Ascending aorta (tissue), 2 donors: ENCODE measurements at regions of chr1 and their contacts with region 1.

Region 1: DNA sequence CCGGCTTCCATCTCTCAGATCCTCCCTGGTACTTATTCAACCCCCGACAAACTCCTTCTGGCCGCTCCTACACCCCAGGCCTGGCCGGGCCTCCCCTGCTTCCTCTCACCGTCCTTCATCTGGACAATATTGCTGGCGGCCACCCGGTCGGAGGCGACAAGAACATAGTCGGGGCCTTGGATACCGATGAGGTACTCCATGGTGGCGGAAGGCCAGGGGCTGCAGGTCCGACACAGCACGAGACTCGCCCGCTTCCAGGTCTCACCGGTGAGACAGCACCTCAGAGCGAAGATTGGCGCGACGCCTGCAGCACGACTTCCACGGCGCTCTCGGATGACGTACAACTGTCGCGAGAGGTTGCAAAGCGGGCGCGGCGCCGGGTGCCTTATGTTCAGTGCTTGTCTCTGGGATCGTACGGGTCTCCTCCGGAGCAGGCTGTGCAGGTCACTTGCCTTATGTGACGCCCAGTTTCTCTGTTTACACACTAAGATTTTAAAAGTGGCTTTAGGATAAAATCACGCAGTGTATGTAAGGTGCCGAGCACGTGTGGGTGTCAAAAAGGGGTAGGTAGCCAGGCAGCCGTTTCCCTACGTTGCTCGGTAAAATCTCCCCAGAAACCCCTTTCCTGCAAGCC is at the start of gene PSMB2:
- DNase-seq: peak; percentile 85 to 97
- H3K4me3 ChIP-seq: peak within 1 kb of the TSS; percentile 88 to 90
- H3K27ac ChIP-seq: peak within 1 kb of the TSS; percentile 87 to 91
- H3K4me1 ChIP-seq: peaks cover 3 to 28% of the 10 kb centered on the region in 2 donors
- H3K27me3 ChIP-seq: no peaks in the 10 kb centered on the region
- CTCF ChIP-seq: no peak
- total RNA-seq, gene PSMB2: 54.0 TPM

Region 2: GRCh38 chr1:34852677-34853217 is 788.6 kb before region 1 on chr1:
- intact Hi-C with region 1: loop called (anchors 10 kb)
- DNase-seq: peak; percentile 87 to 97
- H3K4me3 ChIP-seq: no peak overlapping the region
- H3K27ac ChIP-seq: peak overlapping the region; percentile 83 to 91
- H3K4me1 ChIP-seq: peaks cover 8 to 24% of the 10 kb centered on the region in 2 donors
- H3K27me3 ChIP-seq: no peaks in the 10 kb centered on the region
- CTCF ChIP-seq: peak; percentile 97 to 100 (median 99)

Region 3: DNA sequence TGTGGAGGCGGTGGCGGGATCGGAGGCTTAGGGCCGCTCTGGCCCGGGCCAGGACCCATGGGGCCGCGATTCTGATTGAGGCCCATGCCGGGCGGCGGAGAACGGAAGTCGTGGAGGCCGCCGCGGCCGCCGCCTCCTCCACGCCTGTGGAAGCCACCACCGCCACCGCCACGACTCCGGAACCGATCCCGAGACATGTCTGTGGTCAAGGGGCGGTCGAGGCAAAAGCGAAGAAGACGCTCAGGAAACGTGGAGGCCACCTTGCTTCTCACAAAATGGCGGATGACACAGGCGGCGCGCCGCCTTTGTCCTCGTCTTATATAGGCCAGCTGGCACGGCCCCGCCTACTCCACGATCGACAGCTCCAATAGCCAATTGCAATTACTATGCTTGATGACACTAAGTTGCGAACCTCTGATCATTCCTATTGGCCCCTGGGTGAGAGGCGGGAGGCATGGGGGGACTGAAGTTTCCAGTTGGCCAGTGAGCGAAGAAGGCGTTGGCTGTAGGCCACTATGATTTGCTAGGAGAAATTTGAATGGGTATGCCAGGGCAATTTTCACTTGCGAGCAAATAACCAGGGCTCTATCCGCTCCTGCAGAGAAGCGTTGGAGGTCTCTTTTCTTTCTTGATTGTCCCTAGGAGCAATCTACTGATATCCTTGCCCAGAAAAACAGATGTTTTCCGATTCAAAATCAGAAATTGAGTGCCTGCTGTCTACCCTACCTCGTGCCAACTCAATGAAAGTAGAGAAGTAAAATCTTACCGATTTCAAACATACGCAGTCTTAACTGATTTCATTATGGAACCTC is 448.3 kb before region 1 on chr1 and contains the start of gene SFPQ:
- intact Hi-C with region 1: loop called (anchors 5 kb)
- DNase-seq: peak; percentile 94 to 99
- H3K4me3 ChIP-seq: peak within 1 kb of the TSS; percentile 72 to 100
- H3K27ac ChIP-seq: peak within 1 kb of the TSS; percentile 99
- H3K4me1 ChIP-seq: peaks cover 5 to 22% of the 10 kb centered on the region in 2 donors
- H3K27me3 ChIP-seq: no peaks in the 10 kb centered on the region
- CTCF ChIP-seq: no peak
- total RNA-seq, gene SFPQ: 231 TPM

Region 4: DNA sequence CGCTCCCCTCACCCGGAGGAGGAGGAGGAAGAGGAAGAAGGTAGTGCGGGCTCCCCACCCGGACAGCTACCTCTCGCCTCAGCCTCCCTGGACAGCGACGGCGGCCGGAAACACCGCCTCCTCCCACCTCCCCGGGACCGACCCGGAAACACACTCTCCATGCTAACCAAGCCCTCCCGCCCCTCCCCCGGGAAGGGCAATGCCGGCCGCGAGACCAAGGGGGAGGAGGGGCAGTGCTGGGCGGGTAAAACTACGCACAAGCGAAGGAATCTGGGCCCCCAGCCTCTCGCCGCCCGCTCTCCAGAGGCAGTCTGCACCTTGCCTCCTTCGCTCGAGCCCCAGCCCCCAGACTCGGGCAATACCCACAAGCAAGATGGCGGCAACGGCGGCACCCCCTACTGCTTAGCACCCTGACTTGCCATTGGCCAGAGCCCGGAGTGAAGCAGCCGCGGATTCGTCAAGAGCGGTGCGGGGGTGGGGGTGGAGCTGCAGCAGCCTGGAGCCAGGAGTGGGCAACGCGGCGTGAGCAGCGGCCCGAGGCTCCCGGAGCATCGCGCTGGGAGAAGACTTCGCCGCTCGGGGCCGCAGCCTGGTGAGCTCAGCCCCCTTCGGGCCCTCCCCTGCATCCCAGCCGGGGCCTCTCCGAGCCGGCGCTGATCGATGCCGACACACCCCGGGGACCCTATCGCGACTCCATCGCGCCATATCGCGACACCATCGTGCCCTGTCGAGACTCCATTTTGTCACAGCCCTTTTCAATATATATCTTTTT is 83.9 kb before region 1 on chr1 and contains the starts of genes KIAA0319L and NCDN:
- intact Hi-C with region 1: loop called (anchors 5 kb)
- DNase-seq: peak; percentile 91 to 99
- H3K4me3 ChIP-seq: peak within 1 kb of the TSS; percentile 85 to 98
- H3K27ac ChIP-seq: peak within 1 kb of the TSS; percentile 95 to 97
- H3K4me1 ChIP-seq: peaks cover 4 to 46% of the 10 kb centered on the region in 2 donors
- H3K27me3 ChIP-seq: no peaks in the 10 kb centered on the region
- CTCF ChIP-seq: no peak
- total RNA-seq, gene KIAA0319L: 44.9 TPM
- total RNA-seq, gene NCDN: 20.1 TPM

Region 5: DNA sequence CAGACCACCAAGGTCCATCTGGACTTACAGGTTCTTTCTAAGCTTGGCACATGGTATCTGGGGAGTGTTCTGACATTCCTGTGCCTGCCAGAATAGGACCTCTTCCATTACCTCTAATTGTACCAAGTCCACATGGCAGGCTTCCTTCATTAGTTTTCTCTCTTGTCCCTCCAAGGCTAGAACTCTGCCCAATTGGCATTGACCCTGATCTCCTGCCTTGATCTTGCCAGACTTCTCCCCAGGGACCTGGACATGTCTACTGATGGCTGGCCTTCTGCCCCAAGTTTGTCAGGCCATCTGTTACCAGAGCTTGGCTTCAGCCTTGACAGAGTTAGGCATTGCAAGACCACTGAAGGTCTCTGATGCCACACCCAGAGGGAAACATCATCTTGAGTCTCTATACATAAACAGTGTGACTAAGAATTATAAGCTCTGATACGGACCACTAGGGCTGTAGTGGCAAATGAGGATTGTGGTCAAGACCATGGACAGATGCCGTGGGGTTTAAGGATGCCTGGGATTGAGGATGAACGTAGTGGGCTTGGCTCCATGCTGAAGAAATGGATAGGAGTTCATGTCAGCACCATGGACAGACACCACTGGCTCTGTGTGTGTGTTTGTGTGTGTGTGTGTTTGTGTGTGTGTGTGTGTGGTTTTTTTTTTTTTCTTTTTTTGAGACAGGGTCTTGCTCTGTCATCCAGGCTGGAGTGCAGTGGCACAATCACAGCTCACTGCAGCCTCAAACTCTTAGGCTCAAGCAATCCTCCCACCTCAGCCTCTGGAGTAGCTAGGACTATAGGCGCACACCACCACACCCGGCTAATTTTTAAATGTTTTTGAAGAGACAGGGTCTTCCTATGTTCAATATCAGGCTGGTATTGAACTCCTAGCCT is 19.5 kb after region 1 on chr1:
- intact Hi-C with region 1: no loop called
- DNase-seq: no peak
- H3K4me3 ChIP-seq: no peak overlapping the region
- H3K27ac ChIP-seq: no peak overlapping the region
- H3K4me1 ChIP-seq: no peaks in the 10 kb centered on the region
- H3K27me3 ChIP-seq: no peaks in the 10 kb centered on the region
- CTCF ChIP-seq: no peak

Region 6: GRCh38 chr1:35675773-35676172 is 34.4 kb after region 1 on chr1:
- intact Hi-C with region 1: no loop called
- DNase-seq: no peak
- H3K4me3 ChIP-seq: no peak overlapping the region
- H3K27ac ChIP-seq: no peak overlapping the region
- H3K4me1 ChIP-seq: no peaks in the 10 kb centered on the region
- H3K27me3 ChIP-seq: no peaks in the 10 kb centered on the region
- CTCF ChIP-seq: no peak

Region 7: DNA sequence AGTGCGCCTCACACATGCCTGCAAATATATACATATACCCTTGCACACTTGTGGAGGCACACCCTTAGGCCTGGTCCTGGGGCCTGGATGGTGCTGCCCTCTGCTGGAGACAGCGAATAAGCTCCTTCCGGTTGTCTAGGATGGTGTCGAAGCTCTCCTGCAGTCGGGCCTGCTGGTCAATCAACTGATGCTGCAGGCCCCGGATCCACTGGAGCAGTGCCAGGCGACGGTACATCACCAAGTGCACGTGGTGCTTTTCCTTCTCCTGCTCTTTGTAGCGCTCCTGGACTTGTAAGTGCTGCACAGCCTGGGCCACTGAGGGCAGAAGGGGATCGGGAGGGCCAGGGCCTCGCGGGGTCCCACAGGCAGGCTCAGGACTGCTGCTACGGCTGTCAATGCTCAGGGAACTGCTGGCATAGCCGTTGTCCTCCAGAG is 74.2 kb after region 1 on chr1:
- intact Hi-C with region 1: loop called (anchors 5 kb)
- DNase-seq: peak; percentile 15 to 71
- H3K4me3 ChIP-seq: peak overlapping the region; percentile 5 to 42
- H3K27ac ChIP-seq: no peak overlapping the region
- H3K4me1 ChIP-seq: peaks cover 17 to 26% of the 10 kb centered on the region in 2 donors
- H3K27me3 ChIP-seq: no peaks in the 10 kb centered on the region
- CTCF ChIP-seq: peak; percentile 59 to 79 (median 68)

Region 8: GRCh38 chr1:36099681-36100341 is 458.5 kb after region 1 on chr1:
- intact Hi-C with region 1: no loop called
- DNase-seq: peak in 1 of 2 donors; percentile 88
- H3K4me3 ChIP-seq: no peak overlapping the region
- H3K27ac ChIP-seq: peak overlapping the region in 1 of 2 donors; percentile 37
- H3K4me1 ChIP-seq: peaks cover 0 to 10% of the 10 kb centered on the region in 2 donors
- H3K27me3 ChIP-seq: no peaks in the 10 kb centered on the region
- CTCF ChIP-seq: peak; percentile 74 to 85 (median 81)

Region 9: GRCh38 chr1:36450270-36450918 is 809.0 kb after region 1 on chr1 and contains the start of gene OSCP1:
- intact Hi-C with region 1: loop called (anchors 10 kb)
- DNase-seq: peak; percentile 75 to 97
- H3K4me3 ChIP-seq: peak within 1 kb of the TSS; percentile 55 to 82
- H3K27ac ChIP-seq: peak within 1 kb of the TSS; percentile 95 to 97
- H3K4me1 ChIP-seq: peaks cover 3 to 8% of the 10 kb centered on the region in 2 donors
- H3K27me3 ChIP-seq: no peaks in the 10 kb centered on the region
- CTCF ChIP-seq: no peak
- total RNA-seq, gene OSCP1: 10.6 TPM